Prostate gland (tissue), 2 donors: ENCODE measurements at regions of chr10 and their contacts with region 1.

Region 1: GRCh38 chr10:115948465-115948864 is 324.5 kb downstream of the GFRA1 start:
- DNase-seq: no peak
- H3K4me3 ChIP-seq: no peak overlapping the region
- H3K27ac ChIP-seq: no peak overlapping the region
- H3K4me1 ChIP-seq: no peaks in the 10 kb centered on the region
- H3K27me3 ChIP-seq: peaks cover 2% of the 10 kb centered on the region
- CTCF ChIP-seq: peak in 3 of 4 experiments; percentile 11 to 22 (median 18)
- POLR2A ChIP-seq: no peak

Region 2: GRCh38 chr10:116296291-116296721 is 347.8 kb after region 1 on chr10:
- intact Hi-C with region 1: loop called (anchors 10 kb)
- DNase-seq: no peak
- H3K4me3 ChIP-seq: no peak overlapping the region
- H3K27ac ChIP-seq: no peak overlapping the region
- H3K4me1 ChIP-seq: no peaks in the 10 kb centered on the region
- H3K27me3 ChIP-seq: no peaks in the 10 kb centered on the region
- CTCF ChIP-seq: no peak
- POLR2A ChIP-seq: no peak